Calu3 (cell line): ENCODE measurements at regions of chr11 and their contacts with region 1.

Region 1: GRCh38 chr11:304915-305843 is 2.4 kb upstream of the IFITM2 start:
- DNase-seq: peak; percentile 59
- H3K4me3 Mint-ChIP-seq: no peak overlapping the region
- H3K27ac Mint-ChIP-seq: no peak overlapping the region
- H3K4me1 Mint-ChIP-seq: peaks cover 42% of the 10 kb centered on the region
- H3K27me3 Mint-ChIP-seq: peaks cover 44% of the 10 kb centered on the region
- CTCF ChIP-seq: peak; percentile 61

Region 2: GRCh38 chr11:316031-316701 is 11.0 kb after region 1 on chr11:
- CTCF ChIA-PET with region 1: interaction called, 3 read pairs
- intact Hi-C with region 1: loop called (anchors 1 kb)
- DNase-seq: no peak
- H3K4me3 Mint-ChIP-seq: no peak overlapping the region
- H3K27ac Mint-ChIP-seq: no peak overlapping the region
- H3K4me1 Mint-ChIP-seq: peaks cover 26% of the 10 kb centered on the region
- H3K27me3 Mint-ChIP-seq: peaks cover 53% of the 10 kb centered on the region
- CTCF ChIP-seq: no peak

Region 3: GRCh38 chr11:355581-356458 is 50.6 kb after region 1 on chr11:
- CTCF ChIA-PET with region 1: interaction called, 8 read pairs
- intact Hi-C with region 1: loop called (anchors 10 kb)
- DNase-seq: peak; percentile 84
- H3K4me3 Mint-ChIP-seq: peak overlapping the region; percentile 12
- H3K27ac Mint-ChIP-seq: no peak overlapping the region
- H3K4me1 Mint-ChIP-seq: peaks cover 20% of the 10 kb centered on the region
- H3K27me3 Mint-ChIP-seq: peaks cover 21% of the 10 kb centered on the region
- CTCF ChIP-seq: no peak

Region 4: GRCh38 chr11:774951-775781 is 470.0 kb after region 1 on chr11:
- CTCF ChIA-PET with region 1: no interaction called
- intact Hi-C with region 1: no loop called
- DNase-seq: peak; percentile 66
- H3K4me3 Mint-ChIP-seq: peak overlapping the region; percentile 96
- H3K27ac Mint-ChIP-seq: no peak overlapping the region
- H3K4me1 Mint-ChIP-seq: peaks cover 13% of the 10 kb centered on the region
- H3K27me3 Mint-ChIP-seq: no peaks in the 10 kb centered on the region
- CTCF ChIP-seq: no peak